ENCODE measurements at regions of chr18 and their contacts with region 1.

Region 1: GRCh38 chr18:63320046-63320689 is 599 bp upstream of the BCL2 start:
- DNase-seq: peak; percentile 71 to 93 (median 90)
- ATAC-seq: peak; percentile 89
- H3K4me3 ChIP-seq: peak overlapping the region; percentile 61
- H3K4me3 Mint-ChIP-seq: peak overlapping the region; percentile 86 to 99 (median 94)
- H3K27ac ChIP-seq: peak overlapping the region; percentile 94
- H3K27ac Mint-ChIP-seq: peak overlapping the region; percentile 87 to 98 (median 94)
- H3K4me1 ChIP-seq: peaks cover 13 to 15% of the 10 kb centered on the region in 2 donors
- H3K4me1 Mint-ChIP-seq: peaks cover 21 to 45% (median 38%) of the 10 kb centered on the region in 7 donors
- H3K27me3 ChIP-seq: no peaks in the 10 kb centered on the region
- H3K27me3 Mint-ChIP-seq: no peaks in the 10 kb centered on the region

Region 2: DNA sequence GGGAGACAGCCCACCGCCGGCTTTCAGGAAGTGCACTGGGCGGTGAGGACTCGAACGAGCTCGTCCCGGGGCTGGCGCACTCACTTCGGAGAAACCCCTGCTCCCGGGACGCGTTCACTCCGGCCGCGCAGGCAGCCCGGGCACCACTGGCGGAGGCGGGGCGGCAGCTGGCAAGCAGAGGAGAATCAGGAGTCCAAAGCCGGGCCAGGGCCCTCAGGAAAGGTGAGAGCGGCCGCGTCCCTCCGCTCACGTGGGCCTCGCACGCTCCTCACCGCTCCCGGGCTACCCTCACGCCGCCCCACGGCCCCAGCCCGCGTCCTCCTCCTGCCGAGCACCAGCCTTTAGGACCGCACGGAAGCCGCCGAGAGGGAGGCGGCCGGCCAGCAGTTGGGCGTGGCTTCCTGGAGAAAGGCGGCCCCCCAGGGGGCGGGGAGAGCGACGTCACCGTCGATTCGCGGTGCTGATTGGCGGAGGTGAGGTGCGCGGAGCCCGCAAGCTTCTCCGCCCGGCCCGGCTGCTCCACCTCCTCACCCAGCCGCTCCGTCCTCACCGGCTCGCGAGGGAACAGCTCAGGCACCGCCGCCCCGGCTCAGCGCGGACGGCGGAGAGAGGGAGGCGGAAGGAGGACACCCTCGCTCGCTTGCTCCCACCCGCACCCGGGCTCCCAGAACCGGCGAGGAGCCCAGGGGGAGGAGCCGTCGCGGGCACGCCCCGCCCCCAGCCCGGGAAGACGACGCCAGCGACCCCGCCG is 797.5 kb before region 1 on chr18 and contains the start of gene ZCCHC2:
- CTCF ChIA-PET with region 1: no interaction called
- POLR2A ChIA-PET with region 1: interaction called, 3 read pairs
- intact Hi-C with region 1: loop called (anchors 1 kb)
- DNase-seq: peak; percentile 96 to 100 (median 99)
- ATAC-seq: peak; percentile 88
- H3K4me3 ChIP-seq: peak within 1 kb of the TSS; percentile 81
- H3K4me3 Mint-ChIP-seq: peak within 1 kb of the TSS; percentile 91 to 98 (median 96)
- H3K27ac ChIP-seq: peak within 1 kb of the TSS; percentile 88
- H3K27ac Mint-ChIP-seq: peak within 1 kb of the TSS; percentile 62 to 97 (median 93)
- H3K4me1 ChIP-seq: peaks cover 23 to 26% of the 10 kb centered on the region in 2 donors
- H3K4me1 Mint-ChIP-seq: peaks cover 21 to 44% (median 37%) of the 10 kb centered on the region in 7 donors
- H3K27me3 ChIP-seq: no peaks in the 10 kb centered on the region
- H3K27me3 Mint-ChIP-seq: no peaks in the 10 kb centered on the region
- total RNA-seq, gene ZCCHC2: 51.1 to 68.5 (median 63.1) TPM

Region 3: GRCh38 chr18:63119647-63120046 is 200.5 kb before region 1 on chr18:
- CTCF ChIA-PET with region 1: interaction called, 6 read pairs
- POLR2A ChIA-PET with region 1: no interaction called
- intact Hi-C with region 1: loop called in 1 of 2 experiments (anchors 1 kb)
- DNase-seq: no peak
- ATAC-seq: no peak
- H3K4me3 ChIP-seq: no peak overlapping the region
- H3K4me3 Mint-ChIP-seq: no peak overlapping the region
- H3K27ac ChIP-seq: no peak overlapping the region
- H3K27ac Mint-ChIP-seq: peak overlapping the region in 2 of 9 donors; percentile 6 to 77
- H3K4me1 ChIP-seq: no peaks in the 10 kb centered on the region
- H3K4me1 Mint-ChIP-seq: peaks cover 4 to 21% (median 9%) of the 10 kb centered on the region in 7 donors
- H3K27me3 ChIP-seq: no peaks in the 10 kb centered on the region
- H3K27me3 Mint-ChIP-seq: peaks cover 0 to 36% (median 0%) of the 10 kb centered on the region in 5 donors

Region 4: DNA sequence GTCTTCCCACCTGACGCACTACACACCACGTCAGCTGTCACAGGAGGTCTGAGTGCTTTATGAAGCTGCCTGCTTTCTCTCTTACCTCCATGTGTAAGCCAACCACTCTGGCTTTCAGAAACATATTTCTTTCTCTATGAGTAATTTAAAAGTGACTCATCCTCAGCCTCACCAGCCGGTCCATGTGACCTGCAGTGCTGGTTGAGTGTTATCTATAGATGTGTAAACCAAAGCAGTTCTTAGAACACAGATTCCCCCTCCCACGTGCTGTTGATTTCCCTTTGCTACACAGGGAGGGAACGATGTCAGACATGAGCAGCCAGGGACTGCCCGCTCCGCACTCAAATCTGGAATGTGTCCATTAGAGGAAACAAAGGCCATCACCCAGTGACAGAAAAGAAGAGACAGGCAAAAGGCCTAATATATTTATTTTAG is 158.4 kb before region 1 on chr18:
- CTCF ChIA-PET with region 1: interaction called, 51 read pairs
- POLR2A ChIA-PET with region 1: interaction called, 75 read pairs
- intact Hi-C with region 1: loop called (anchors 1 kb)
- DNase-seq: peak; percentile 39 to 94 (median 75)
- ATAC-seq: peak; percentile 90
- H3K4me3 ChIP-seq: peak overlapping the region; percentile 40
- H3K4me3 Mint-ChIP-seq: peak overlapping the region; percentile 74 to 99 (median 86)
- H3K27ac ChIP-seq: peak overlapping the region; percentile 90
- H3K27ac Mint-ChIP-seq: peak overlapping the region; percentile 93 to 99 (median 95)
- H3K4me1 ChIP-seq: peaks cover 63 to 69% of the 10 kb centered on the region in 2 donors
- H3K4me1 Mint-ChIP-seq: peaks cover 70 to 98% (median 94%) of the 10 kb centered on the region in 7 donors
- H3K27me3 ChIP-seq: no peaks in the 10 kb centered on the region
- H3K27me3 Mint-ChIP-seq: no peaks in the 10 kb centered on the region

Region 5: DNA sequence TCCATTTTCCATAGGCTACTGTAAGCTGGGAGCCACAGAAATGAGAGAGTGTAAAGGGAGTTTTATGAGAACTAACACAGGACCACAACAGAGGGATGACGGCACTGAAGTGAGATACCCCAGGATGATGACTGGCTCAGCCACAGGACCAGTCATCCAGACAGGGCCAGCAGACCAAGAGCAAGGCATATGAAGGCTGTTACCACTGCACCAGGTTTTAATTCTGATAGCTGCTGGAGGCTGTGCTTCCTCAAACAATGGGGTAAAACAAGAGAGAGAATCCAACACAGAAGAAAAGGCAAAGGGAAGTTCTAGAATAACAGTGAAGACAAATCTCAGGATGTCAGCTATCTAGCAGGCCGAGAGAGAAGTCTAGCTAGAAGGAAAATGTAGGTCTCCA is 95.5 kb before region 1 on chr18:
- CTCF ChIA-PET with region 1: interaction called, 5 read pairs
- POLR2A ChIA-PET with region 1: interaction called, 12 read pairs
- intact Hi-C with region 1: loop called in 1 of 2 experiments (anchors 2 kb)
- DNase-seq: peak in 1 of 9 donors; percentile 49
- ATAC-seq: peak; percentile 76
- H3K4me3 ChIP-seq: no peak overlapping the region
- H3K4me3 Mint-ChIP-seq: peak overlapping the region in 8 of 10 donors; percentile 12 to 74 (median 53)
- H3K27ac ChIP-seq: peak overlapping the region; percentile 47
- H3K27ac Mint-ChIP-seq: peak overlapping the region; percentile 5 to 93 (median 84)
- H3K4me1 ChIP-seq: peaks cover 29 to 42% of the 10 kb centered on the region in 2 donors
- H3K4me1 Mint-ChIP-seq: peaks cover 68 to 94% (median 88%) of the 10 kb centered on the region in 7 donors
- H3K27me3 ChIP-seq: no peaks in the 10 kb centered on the region
- H3K27me3 Mint-ChIP-seq: no peaks in the 10 kb centered on the region

Region 6: GRCh38 chr18:63299837-63300745 is 20.1 kb before region 1 on chr18:
- CTCF ChIA-PET with region 1: interaction called, 18 read pairs
- POLR2A ChIA-PET with region 1: interaction called, 16 read pairs
- intact Hi-C with region 1: loop called in 1 of 2 experiments (anchors 1 kb)
- DNase-seq: peak in 1 of 9 donors; percentile 36
- ATAC-seq: peak; percentile 52
- H3K4me3 ChIP-seq: no peak overlapping the region
- H3K4me3 Mint-ChIP-seq: peak overlapping the region; percentile 25 to 78 (median 63)
- H3K27ac ChIP-seq: peak overlapping the region; percentile 57
- H3K27ac Mint-ChIP-seq: peak overlapping the region; percentile 55 to 95 (median 89)
- H3K4me1 ChIP-seq: peaks cover 59 to 68% of the 10 kb centered on the region in 2 donors
- H3K4me1 Mint-ChIP-seq: peaks cover 58 to 87% (median 86%) of the 10 kb centered on the region in 7 donors
- H3K27me3 ChIP-seq: no peaks in the 10 kb centered on the region
- H3K27me3 Mint-ChIP-seq: no peaks in the 10 kb centered on the region

Region 7: GRCh38 chr18:63439334-63439733 is 119.2 kb after region 1 on chr18:
- CTCF ChIA-PET with region 1: interaction called, 4 read pairs
- POLR2A ChIA-PET with region 1: no interaction called
- intact Hi-C with region 1: loop called (anchors 1 kb)
- DNase-seq: peak; percentile 12 to 64 (median 49)
- ATAC-seq: peak; percentile 81
- H3K4me3 ChIP-seq: no peak overlapping the region
- H3K4me3 Mint-ChIP-seq: no peak overlapping the region
- H3K27ac ChIP-seq: no peak overlapping the region
- H3K27ac Mint-ChIP-seq: no peak overlapping the region
- H3K4me1 ChIP-seq: no peaks in the 10 kb centered on the region
- H3K4me1 Mint-ChIP-seq: peaks cover 0 to 4% (median 3%) of the 10 kb centered on the region in 7 donors
- H3K27me3 ChIP-seq: no peaks in the 10 kb centered on the region
- H3K27me3 Mint-ChIP-seq: peaks cover 0 to 43% (median 5%) of the 10 kb centered on the region in 5 donors

Measured in naive thymus-derived CD4-positive, alpha-beta T cell (primary cell).